ENCODE measurements at regions of chr4 and their contacts with region 1.

Region 1: DNA sequence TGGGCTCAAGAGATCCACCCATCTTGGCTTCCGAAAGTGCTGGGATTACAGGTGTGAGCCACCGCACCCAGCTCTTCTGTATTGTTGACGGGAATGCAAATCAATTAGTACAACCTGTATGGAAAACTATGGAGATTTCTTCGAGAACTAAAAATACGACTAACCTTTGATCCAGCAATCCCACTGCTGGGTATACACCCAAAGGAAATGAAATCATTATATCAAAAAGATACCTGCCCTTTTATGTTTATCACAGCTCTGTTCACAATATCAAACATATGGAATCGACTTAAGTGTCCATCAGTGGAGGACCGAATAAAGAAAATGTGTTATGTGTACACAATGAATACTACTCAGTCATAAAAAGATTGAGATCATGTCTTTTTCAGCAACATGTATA is 49.3 kb downstream of the ELOVL6 start:
- DNase-seq: no peak
- ATAC-seq: no peak
- H3K4me3 ChIP-seq: no peak overlapping the region
- H3K27ac ChIP-seq: no peak overlapping the region
- H3K4me1 ChIP-seq: no peaks in the 10 kb centered on the region
- H3K27me3 ChIP-seq: no peaks in the 10 kb centered on the region
- CTCF ChIP-seq: no peak

Region 2: GRCh38 chr4:109433205-109434006 is 715.7 kb before region 1 on chr4 and contains the start of gene SEC24B:
- intact Hi-C with region 1: no loop called
- DNase-seq: peak; percentile 91 to 93
- ATAC-seq: peak; percentile 96 to 98 (median 96)
- H3K4me3 ChIP-seq: peak within 1 kb of the TSS; percentile 63 to 91 (median 85)
- H3K27ac ChIP-seq: peak within 1 kb of the TSS; percentile 89 to 98 (median 95)
- H3K4me1 ChIP-seq: peaks cover 5 to 51% (median 48%) of the 10 kb centered on the region in 9 donors
- H3K27me3 ChIP-seq: no peaks in the 10 kb centered on the region
- CTCF ChIP-seq: peak; percentile 73 to 98 (median 90)
- total RNA-seq, gene SEC24B: 22.4 to 34.1 (median 29.7) TPM

Region 3: DNA sequence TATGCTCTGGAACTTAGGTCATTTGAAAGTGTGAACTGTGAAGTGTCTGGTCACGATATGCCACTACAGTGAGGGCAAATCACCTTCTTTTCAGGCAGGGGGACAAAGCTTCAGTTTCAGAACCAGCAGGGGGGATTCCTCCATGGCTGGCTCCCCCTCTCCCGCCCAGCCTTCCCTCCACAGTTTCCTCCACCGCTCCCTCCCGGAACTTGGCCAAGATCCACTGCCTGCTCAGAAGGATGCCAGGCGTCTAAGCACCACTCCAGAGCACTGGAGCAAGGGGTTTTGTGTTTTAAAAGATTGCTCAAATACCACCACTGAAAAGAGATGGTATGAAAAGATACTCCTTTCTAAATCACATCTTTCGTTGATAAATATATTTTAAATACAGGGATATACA is 77.6 kb before region 1 on chr4:
- intact Hi-C with region 1: no loop called
- DNase-seq: peak; percentile 21 to 23
- ATAC-seq: peak in 6 of 8 donors; percentile 58 to 79 (median 64)
- H3K4me3 ChIP-seq: no peak overlapping the region
- H3K27ac ChIP-seq: no peak overlapping the region
- H3K4me1 ChIP-seq: peaks cover 0 to 18% (median 10%) of the 10 kb centered on the region in 9 donors
- H3K27me3 ChIP-seq: no peaks in the 10 kb centered on the region
- CTCF ChIP-seq: no peak

Region 4: GRCh38 chr4:111230265-111230664 is 1081.2 kb after region 1 on chr4:
- intact Hi-C with region 1: loop called in 1 of 10 experiments (anchors 5 kb)
- DNase-seq: no peak
- ATAC-seq: no peak
- H3K4me3 ChIP-seq: no peak overlapping the region
- H3K27ac ChIP-seq: no peak overlapping the region
- H3K4me1 ChIP-seq: no peaks in the 10 kb centered on the region
- H3K27me3 ChIP-seq: no peaks in the 10 kb centered on the region
- CTCF ChIP-seq: no peak

Measured in heart right ventricle (tissue), 16 donors.